ENCODE measurements at regions of chr6 and their contacts with region 1.

Region 1: GRCh38 chr6:75284632-75285286 is at the start of gene TMEM30A:
- DNase-seq: peak; percentile 98
- H3K4me3 ChIP-seq: peak within 1 kb of the TSS; percentile 94
- H3K27ac ChIP-seq: peak within 1 kb of the TSS; percentile 82
- H3K4me1 ChIP-seq: peaks cover 42% of the 10 kb centered on the region
- CTCF ChIP-seq: no peak
- total RNA-seq, gene TMEM30A: 16.4 and 18.2 TPM in 2 replicates

Region 2: DNA sequence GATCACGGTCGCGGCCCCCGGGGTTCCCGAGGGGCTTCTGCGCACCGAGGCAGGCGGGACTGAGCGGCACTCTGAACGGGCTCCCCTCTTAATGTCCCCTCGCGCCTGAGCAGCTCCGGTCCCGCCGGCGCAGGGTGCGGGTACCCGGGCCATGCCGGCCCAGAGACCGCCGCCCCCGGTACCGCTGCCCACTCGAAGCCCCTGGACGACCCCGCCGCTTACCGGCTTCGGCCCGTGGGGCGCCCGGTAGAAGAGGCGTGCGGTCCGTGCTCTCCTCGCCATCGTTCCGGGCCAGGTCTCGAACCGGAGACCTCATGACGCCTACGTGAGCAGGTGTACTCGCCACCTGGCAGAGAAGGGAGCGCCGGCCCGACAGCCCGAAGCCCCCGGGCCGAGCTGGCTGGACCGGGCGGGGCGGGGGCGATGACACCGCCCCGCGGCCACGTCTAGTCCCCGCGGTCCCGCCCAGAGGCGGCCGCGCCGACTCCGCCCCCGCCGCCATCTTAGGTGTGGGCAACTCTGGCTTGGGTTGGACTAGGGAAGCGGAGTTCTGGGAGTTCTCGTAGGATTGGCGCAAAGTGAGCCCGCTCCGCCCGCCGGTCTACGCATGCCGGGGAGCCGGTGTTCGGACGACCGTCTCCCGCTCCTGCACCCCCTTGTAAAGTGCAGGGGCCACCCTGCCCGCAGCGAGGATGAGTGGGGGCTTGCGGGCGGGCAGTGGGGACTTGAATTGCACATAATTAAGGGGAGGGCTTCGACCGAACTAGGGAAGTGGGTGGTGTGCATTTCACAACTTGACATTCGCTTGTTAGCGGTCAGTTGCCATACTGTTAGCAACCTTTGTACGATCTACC is 1631.0 kb before region 1 on chr6 and contains the start of gene SLC17A5:
- CTCF ChIA-PET with region 1: no interaction called
- POLR2A ChIA-PET with region 1: no interaction called
- intact Hi-C with region 1: loop called (anchors 5 kb)
- DNase-seq: peak; percentile 93
- H3K4me3 ChIP-seq: peak within 1 kb of the TSS; percentile 96
- H3K27ac ChIP-seq: peak within 1 kb of the TSS; percentile 83
- H3K4me1 ChIP-seq: peaks cover 19% of the 10 kb centered on the region
- CTCF ChIP-seq: no peak
- total RNA-seq, gene SLC17A5: 7.4 and 8.5 TPM in 2 replicates

Region 3: GRCh38 chr6:75171567-75171966 is 113.2 kb before region 1 on chr6:
- CTCF ChIA-PET with region 1: no interaction called
- POLR2A ChIA-PET with region 1: no interaction called
- intact Hi-C with region 1: no loop called
- DNase-seq: no peak
- H3K4me3 ChIP-seq: no peak overlapping the region
- H3K27ac ChIP-seq: no peak overlapping the region
- H3K4me1 ChIP-seq: no peaks in the 10 kb centered on the region
- CTCF ChIP-seq: no peak

Region 4: DNA sequence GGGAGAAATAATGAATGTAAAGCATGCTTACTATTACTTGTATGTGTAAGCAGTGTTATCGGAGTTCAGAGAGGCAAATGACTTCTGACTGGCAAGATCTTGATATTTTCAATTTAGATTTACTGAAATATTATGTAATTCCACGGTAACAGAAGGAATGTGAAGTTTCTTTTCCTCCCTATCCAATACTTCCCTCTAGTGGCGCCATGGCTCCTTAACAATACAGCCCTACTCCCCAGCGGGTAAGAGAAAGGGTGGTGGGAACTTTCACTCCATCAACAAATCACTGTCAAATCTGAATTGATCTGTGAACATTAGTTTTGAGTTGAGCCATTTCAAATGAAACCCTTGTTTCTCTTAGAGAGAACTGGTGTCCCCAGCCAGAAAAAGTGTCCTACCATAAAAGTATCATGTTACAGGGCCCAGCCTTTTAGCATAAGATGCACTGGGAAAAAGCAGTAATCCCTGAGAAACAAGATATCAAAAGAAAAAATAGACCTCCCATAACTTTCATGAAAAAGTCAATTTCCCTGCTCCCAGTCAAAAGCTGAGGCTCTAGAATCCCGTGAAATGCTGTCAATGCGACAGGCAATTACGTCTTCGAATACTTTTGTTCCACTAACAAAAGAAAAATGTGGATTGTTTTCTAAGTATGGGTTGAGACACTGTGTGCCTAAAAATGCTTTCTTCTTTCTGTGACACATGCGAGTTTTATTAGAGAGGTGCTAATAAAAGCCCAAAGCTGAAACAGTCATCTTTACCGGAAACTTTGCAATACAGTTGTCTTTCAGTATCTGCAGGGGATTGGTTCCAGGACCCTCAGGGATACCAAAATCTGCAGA is 54.1 kb before region 1 on chr6:
- CTCF ChIA-PET with region 1: no interaction called
- POLR2A ChIA-PET with region 1: no interaction called
- intact Hi-C with region 1: no loop called
- DNase-seq: no peak
- H3K4me3 ChIP-seq: no peak overlapping the region
- H3K27ac ChIP-seq: no peak overlapping the region
- H3K4me1 ChIP-seq: no peaks in the 10 kb centered on the region
- CTCF ChIP-seq: peak; percentile 65

Region 5: DNA sequence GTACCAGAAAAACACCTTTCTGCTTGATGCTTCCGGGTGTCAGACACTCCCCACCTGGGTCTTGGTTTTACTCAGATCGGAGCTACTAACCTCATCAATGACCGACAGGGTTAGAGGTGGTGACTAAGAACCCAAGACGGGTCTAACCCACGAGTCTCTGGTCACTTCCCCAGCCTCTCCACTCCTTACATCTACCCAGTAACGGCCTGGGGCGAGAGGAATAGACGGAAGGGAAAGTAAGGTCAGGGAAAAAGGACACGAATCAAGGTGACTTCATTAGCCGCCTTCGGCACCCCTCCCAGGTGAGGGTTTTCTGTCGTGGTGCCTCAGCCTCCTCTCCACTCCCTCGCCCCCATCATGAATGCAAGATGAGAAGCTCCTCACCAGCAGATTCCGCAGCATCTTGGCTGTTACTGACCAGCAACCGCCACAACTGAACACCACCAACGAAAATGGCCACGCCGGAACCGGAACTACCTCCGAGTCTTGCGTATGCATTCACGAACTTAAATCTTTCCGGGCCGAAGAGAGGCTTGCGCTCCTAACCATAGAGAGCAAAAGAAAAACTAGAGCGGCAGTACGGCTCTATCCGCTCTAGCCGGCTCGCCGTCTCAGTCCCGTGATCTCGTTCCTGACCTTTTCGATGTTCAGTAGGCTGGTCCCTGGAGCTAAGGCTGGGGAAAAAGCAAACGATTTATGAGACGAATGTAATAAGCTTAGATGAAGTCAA is 41.3 kb before region 1 on chr6 and contains the start of gene COX7A2:
- CTCF ChIA-PET with region 1: interaction called, 5 read pairs
- POLR2A ChIA-PET with region 1: interaction called, 13 read pairs
- intact Hi-C with region 1: loop called (anchors 1 kb)
- DNase-seq: peak; percentile 95
- H3K4me3 ChIP-seq: peak within 1 kb of the TSS; percentile 97
- H3K27ac ChIP-seq: peak within 1 kb of the TSS; percentile 80
- H3K4me1 ChIP-seq: peaks cover 13% of the 10 kb centered on the region
- CTCF ChIP-seq: no peak
- total RNA-seq, gene COX7A2: 133 and 210 TPM in 2 replicates

Region 6: DNA sequence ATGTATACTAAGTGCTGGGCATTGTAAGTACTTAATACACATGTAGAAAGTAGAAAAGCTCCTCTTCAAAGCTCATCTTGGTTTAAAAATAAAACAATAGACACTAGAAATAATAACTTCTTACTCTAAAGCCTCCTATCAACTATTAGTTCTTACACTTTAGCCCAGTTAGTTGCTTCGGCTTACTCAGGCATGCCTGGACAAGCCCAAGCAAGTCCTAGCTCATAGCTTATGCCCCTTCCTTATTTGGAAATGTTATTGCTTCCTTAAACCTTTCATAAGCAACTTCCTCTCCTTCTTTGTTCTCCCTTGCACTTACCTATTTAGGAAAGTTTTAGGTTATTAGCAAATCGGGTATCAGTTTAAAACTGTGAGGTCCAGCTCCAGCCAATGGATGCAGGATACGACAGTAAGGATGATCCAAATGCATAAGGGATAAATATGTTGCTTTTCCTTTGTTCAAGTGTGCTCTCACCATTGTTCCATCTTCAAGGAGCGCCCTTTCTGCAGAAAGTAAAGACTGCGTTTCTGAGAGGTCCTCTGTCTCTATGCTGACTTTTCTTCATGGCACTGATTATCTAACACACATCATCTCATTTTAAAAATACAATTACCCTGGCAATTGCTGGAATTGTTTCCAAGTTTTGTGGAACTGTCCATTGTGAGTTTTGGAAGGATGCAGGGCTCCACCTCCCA is 12.5 kb before region 1 on chr6:
- CTCF ChIA-PET with region 1: interaction called, 3 read pairs
- POLR2A ChIA-PET with region 1: interaction called, 36 read pairs
- intact Hi-C with region 1: no loop called
- DNase-seq: no peak
- H3K4me3 ChIP-seq: no peak overlapping the region
- H3K27ac ChIP-seq: peak overlapping the region; percentile 25
- H3K4me1 ChIP-seq: peaks cover 19% of the 10 kb centered on the region
- CTCF ChIP-seq: no peak

Region 7: DNA sequence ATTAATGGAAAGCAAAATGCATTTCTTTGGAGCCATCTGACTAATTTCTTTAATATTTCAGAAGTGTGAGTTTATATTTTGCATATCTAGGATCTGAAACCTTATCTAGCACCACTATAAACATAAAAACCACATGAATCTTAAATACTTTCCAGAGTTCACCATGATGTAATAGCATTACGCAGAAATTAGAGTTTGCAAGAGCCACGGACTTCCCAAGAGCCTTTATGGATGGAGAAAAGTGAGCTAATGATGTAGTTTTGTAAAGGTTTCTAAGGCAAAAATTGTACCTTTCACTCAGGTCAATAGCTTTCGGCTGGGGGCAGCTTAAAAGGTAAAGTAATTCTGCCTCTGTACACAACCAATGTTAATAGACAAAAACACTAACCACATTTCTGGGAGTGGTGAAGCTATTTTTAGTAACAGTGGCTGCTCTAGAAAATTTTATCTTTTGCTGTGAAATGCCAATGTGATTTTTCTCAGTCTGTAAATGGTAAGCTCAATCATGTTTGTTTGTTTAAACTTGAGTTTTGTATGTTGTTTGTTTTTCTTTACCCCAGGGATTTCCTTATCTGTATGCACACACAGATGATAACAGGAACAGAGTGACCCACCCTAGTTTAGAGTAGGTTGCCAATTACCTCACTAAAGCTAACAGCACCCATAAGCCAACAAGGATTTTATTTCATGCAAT is 128.4 kb after region 1 on chr6:
- CTCF ChIA-PET with region 1: no interaction called
- POLR2A ChIA-PET with region 1: no interaction called
- intact Hi-C with region 1: no loop called
- DNase-seq: no peak
- H3K4me3 ChIP-seq: no peak overlapping the region
- H3K27ac ChIP-seq: no peak overlapping the region
- H3K4me1 ChIP-seq: no peaks in the 10 kb centered on the region
- CTCF ChIP-seq: no peak

Region 8: GRCh38 chr6:75601304-75602245 is 316.8 kb after region 1 on chr6 and contains the start of gene SENP6:
- CTCF ChIA-PET with region 1: no interaction called
- POLR2A ChIA-PET with region 1: interaction called, 3 read pairs
- intact Hi-C with region 1: loop called (anchors 1 kb)
- DNase-seq: peak; percentile 85
- H3K4me3 ChIP-seq: peak within 1 kb of the TSS; percentile 98
- H3K27ac ChIP-seq: peak within 1 kb of the TSS; percentile 82
- H3K4me1 ChIP-seq: peaks cover 30% of the 10 kb centered on the region
- CTCF ChIP-seq: no peak
- total RNA-seq, gene SENP6: 61.1 and 63.5 TPM in 2 replicates

Measured in OCI-LY7 (cell line).